CD8-positive, alpha-beta T cell (primary cell): ENCODE measurements at regions of chr15 and their contacts with region 1.

Region 1: GRCh38 chr15:20367093-20367492 is 174.5 kb downstream of the GOLGA6L6 start:
- DNase-seq: no peak
- ATAC-seq: no peak
- H3K4me3 ChIP-seq: no peak overlapping the region
- H3K4me3 Mint-ChIP-seq: no peak overlapping the region
- H3K27ac ChIP-seq: no peak overlapping the region
- H3K27ac Mint-ChIP-seq: no peak overlapping the region
- H3K4me1 ChIP-seq: no peaks in the 10 kb centered on the region
- H3K4me1 Mint-ChIP-seq: no peaks in the 10 kb centered on the region
- H3K27me3 ChIP-seq: no peaks in the 10 kb centered on the region
- H3K27me3 Mint-ChIP-seq: no peaks in the 10 kb centered on the region
- CTCF ChIP-seq: no peak

Region 2: GRCh38 chr15:20106026-20106425 is 261.1 kb before region 1 on chr15:
- CTCF ChIA-PET with region 1: no interaction called
- POLR2A ChIA-PET with region 1: no interaction called
- intact Hi-C with region 1: no loop called
- DNase-seq: peak in 3 of 9 experiments; percentile 4 to 12 (median 4)
- ATAC-seq: no peak
- H3K4me3 ChIP-seq: no peak overlapping the region
- H3K4me3 Mint-ChIP-seq: no peak overlapping the region
- H3K27ac ChIP-seq: no peak overlapping the region
- H3K27ac Mint-ChIP-seq: no peak overlapping the region
- H3K4me1 ChIP-seq: no peaks in the 10 kb centered on the region
- H3K4me1 Mint-ChIP-seq: no peaks in the 10 kb centered on the region
- H3K27me3 ChIP-seq: no peaks in the 10 kb centered on the region
- H3K27me3 Mint-ChIP-seq: no peaks in the 10 kb centered on the region
- CTCF ChIP-seq: no peak

Region 3: GRCh38 chr15:20348982-20349768 is 17.9 kb before region 1 on chr15:
- CTCF ChIA-PET with region 1: no interaction called
- POLR2A ChIA-PET with region 1: no interaction called
- intact Hi-C with region 1: loop called in 1 of 2 experiments (anchors 2 kb)
- DNase-seq: peak in 7 of 9 experiments; percentile 3 to 50 (median 16)
- ATAC-seq: no peak
- H3K4me3 ChIP-seq: no peak overlapping the region
- H3K4me3 Mint-ChIP-seq: no peak overlapping the region
- H3K27ac ChIP-seq: no peak overlapping the region
- H3K27ac Mint-ChIP-seq: no peak overlapping the region
- H3K4me1 ChIP-seq: peaks cover 11% of the 10 kb centered on the region
- H3K4me1 Mint-ChIP-seq: no peaks in the 10 kb centered on the region
- H3K27me3 ChIP-seq: peaks cover 0 to 6% of the 10 kb centered on the region in 2 experiments
- H3K27me3 Mint-ChIP-seq: peaks cover 2% of the 10 kb centered on the region
- CTCF ChIP-seq: no peak

Region 4: GRCh38 chr15:20409247-20409646 is 42.2 kb after region 1 on chr15:
- CTCF ChIA-PET with region 1: no interaction called
- POLR2A ChIA-PET with region 1: no interaction called
- intact Hi-C with region 1: no loop called
- DNase-seq: no peak
- ATAC-seq: no peak
- H3K4me3 ChIP-seq: no peak overlapping the region
- H3K4me3 Mint-ChIP-seq: no peak overlapping the region
- H3K27ac ChIP-seq: no peak overlapping the region
- H3K27ac Mint-ChIP-seq: no peak overlapping the region
- H3K4me1 ChIP-seq: no peaks in the 10 kb centered on the region
- H3K4me1 Mint-ChIP-seq: no peaks in the 10 kb centered on the region
- H3K27me3 ChIP-seq: no peaks in the 10 kb centered on the region
- H3K27me3 Mint-ChIP-seq: peaks cover 2% of the 10 kb centered on the region
- CTCF ChIP-seq: no peak

Region 5: GRCh38 chr15:22253676-22254408 is 1886.7 kb after region 1 on chr15:
- CTCF ChIA-PET with region 1: no interaction called
- POLR2A ChIA-PET with region 1: no interaction called
- intact Hi-C with region 1: loop called in 1 of 2 experiments (anchors 5 kb)
- DNase-seq: peak in 3 of 9 experiments; percentile 44 to 62 (median 50)
- ATAC-seq: peak; percentile 57
- H3K4me3 ChIP-seq: no peak overlapping the region
- H3K4me3 Mint-ChIP-seq: no peak overlapping the region
- H3K27ac ChIP-seq: peak overlapping the region in 1 of 2 experiments; percentile 18
- H3K27ac Mint-ChIP-seq: no peak overlapping the region
- H3K4me1 ChIP-seq: peaks cover 13% of the 10 kb centered on the region
- H3K4me1 Mint-ChIP-seq: peaks cover 17% of the 10 kb centered on the region
- H3K27me3 ChIP-seq: peaks cover 5 to 6% of the 10 kb centered on the region in 2 experiments
- H3K27me3 Mint-ChIP-seq: peaks cover 18% of the 10 kb centered on the region
- CTCF ChIP-seq: no peak